GM13977 (cell line): ENCODE measurements at regions of chrX and their contacts with region 1.

Region 1: DNA sequence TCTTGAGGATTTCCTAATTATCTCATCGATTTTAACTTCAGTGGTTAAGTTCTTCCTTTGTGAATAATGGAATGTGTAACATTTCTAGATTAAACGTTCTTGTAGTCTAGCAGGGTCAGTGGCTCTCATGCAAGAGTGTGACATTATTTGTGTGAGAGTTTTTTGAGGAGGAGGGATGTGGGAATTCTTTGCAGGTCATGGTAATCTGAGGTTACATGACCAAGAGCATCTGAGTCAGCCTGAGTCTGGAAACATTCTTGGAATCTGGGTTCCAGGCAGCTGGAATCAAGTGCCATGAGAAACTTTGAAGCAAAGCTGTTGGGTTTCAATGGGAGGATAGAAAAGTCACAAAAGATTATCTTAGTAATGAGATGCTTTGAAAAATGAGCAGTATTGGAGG is 49.5 kb downstream of the GK start:
- DNase-seq: no peak
- CTCF ChIP-seq: no peak

Region 2: DNA sequence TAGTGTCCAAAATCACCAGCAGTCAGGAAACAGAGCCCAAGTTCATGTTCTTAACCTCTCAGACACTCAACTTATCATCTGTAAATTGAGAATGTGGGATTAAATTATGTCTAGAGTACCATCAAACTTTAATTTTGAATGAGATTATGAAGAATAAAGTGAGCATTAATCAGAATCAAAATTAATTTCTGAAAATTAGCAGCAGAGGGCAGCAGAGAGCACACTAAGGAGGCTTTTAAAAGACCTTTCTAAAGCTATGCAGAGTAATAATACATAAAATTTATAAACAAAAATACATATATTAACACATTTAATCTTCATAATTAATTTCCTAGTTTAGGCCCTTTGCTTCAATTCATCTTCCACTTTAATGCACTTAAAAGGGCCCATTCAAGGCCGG is 132.2 kb before region 1 on chrX:
- in situ Hi-C with region 1: loop called (anchors 10 kb)
- DNase-seq: no peak
- CTCF ChIP-seq: peak; percentile 52